GM12878 (cell line): ENCODE measurements at regions of chr14 and their contacts with region 1.

Region 1: DNA sequence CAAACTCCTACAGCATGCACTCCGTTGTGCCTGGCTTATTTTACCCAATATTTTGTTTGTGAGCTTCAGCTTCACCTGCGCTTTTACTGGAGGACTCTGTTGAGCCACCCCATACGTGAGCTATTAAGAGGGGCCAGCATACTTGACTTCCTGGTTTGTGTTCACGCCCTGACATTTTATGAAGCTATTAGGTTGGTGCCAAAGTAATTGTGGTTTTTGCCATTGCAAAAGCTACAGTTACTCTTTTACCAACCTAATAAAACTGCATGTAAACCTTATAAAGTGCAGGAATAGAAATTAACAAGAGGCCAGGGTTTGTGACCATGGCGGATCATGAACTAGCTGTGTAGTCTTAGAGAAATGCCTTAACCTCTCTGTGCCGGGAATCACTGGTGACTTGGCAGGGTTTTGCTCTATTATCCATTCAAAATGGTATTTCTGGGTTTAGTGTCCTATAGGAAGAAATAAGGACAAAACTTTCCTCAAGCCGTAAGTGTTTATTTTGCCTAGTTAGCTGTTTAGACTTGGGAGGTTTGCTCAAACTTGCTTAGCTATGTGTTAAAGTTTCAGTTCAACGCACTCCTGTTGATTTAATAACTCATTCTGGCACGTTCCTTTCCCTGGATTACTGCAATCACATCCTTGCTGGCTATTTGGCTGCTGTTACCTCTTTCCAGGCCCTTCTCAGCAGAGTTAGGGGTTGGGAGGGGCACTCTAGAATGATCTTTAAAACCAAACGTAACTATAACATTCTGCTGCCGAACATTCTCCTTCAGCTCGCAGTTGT is 1027.6 kb downstream of the BCL11B start:
- DNase-seq: no peak
- ATAC-seq: no peak
- H3K4me3 ChIP-seq: no peak overlapping the region
- H3K27ac ChIP-seq: no peak overlapping the region
- H3K4me1 ChIP-seq: no peaks in the 10 kb centered on the region
- H3K27me3 ChIP-seq: no peaks in the 10 kb centered on the region
- CTCF ChIP-seq: no peak
- EP300 ChIP-seq: no peak
- POLR2A ChIP-seq: no peak
- RAD21 ChIP-seq: no peak

Region 2: DNA sequence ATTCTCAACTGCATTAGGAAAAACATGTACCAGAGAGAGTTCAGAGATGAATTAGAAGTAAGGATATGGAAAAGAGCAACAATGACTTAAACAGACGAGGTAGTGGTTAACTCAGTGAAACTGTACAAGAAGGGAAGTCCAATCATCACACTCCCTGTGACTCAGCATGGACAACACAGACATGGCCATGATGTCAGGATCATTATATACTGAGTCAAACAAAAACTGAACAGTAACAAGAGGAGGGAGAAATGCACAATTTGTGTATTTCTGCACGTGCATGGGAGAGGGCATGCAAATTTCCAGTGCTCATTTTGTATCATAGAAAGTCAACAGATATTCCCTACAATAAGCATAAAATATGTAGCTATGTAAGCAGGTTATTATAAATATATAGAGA is 10.1 kb before region 1 on chr14:
- CTCF ChIA-PET with region 1: interaction called, 6 read pairs
- POLR2A ChIA-PET with region 1: interaction called, 4 read pairs
- RAD21 ChIA-PET with region 1: interaction called, 8 read pairs
- SMC1A ChIA-PET with region 1: interaction called, 20 read pairs
- in situ Hi-C with region 1: no loop called
- intact Hi-C with region 1: no loop called
- DNase-seq: no peak
- ATAC-seq: peak; percentile 65
- H3K4me3 ChIP-seq: no peak overlapping the region
- H3K27ac ChIP-seq: no peak overlapping the region
- H3K4me1 ChIP-seq: no peaks in the 10 kb centered on the region
- H3K27me3 ChIP-seq: no peaks in the 10 kb centered on the region
- CTCF ChIP-seq: no peak
- EP300 ChIP-seq: 0 out of 4 replicates have a peak, but pooled peaks of 1 of the 2 experiments have one; percentile 14
- POLR2A ChIP-seq: no peak
- RAD21 ChIP-seq: no peak

Region 3: GRCh38 chr14:98433436-98433835 is 189.1 kb after region 1 on chr14:
- CTCF ChIA-PET with region 1: no interaction called
- POLR2A ChIA-PET with region 1: no interaction called
- RAD21 ChIA-PET with region 1: no interaction called
- SMC1A ChIA-PET with region 1: no interaction called
- in situ Hi-C with region 1: no loop called
- intact Hi-C with region 1: no loop called
- DNase-seq: no peak
- ATAC-seq: no peak
- H3K4me3 ChIP-seq: no peak overlapping the region
- H3K27ac ChIP-seq: no peak overlapping the region
- H3K4me1 ChIP-seq: no peaks in the 10 kb centered on the region
- H3K27me3 ChIP-seq: no peaks in the 10 kb centered on the region
- CTCF ChIP-seq: no peak
- EP300 ChIP-seq: no peak
- POLR2A ChIP-seq: no peak
- RAD21 ChIP-seq: no peak